Activated B cell treated with CpG ODN at 0.5 μM for 24 hours (primary cell): ENCODE measurements at regions of chr4 and their contacts with region 1.

Region 1: GRCh38 chr4:185304944-185305690 is 90.6 kb downstream of the LRP2BP start:
- DNase-seq: no peak
- ATAC-seq: peak; percentile 86
- H3K4me3 Mint-ChIP-seq: no peak overlapping the region
- H3K27ac Mint-ChIP-seq: peak overlapping the region; percentile 2
- H3K4me1 Mint-ChIP-seq: peaks cover 35% of the 10 kb centered on the region
- H3K27me3 Mint-ChIP-seq: no peaks in the 10 kb centered on the region
- CTCF ChIP-seq: no peak

Region 2: DNA sequence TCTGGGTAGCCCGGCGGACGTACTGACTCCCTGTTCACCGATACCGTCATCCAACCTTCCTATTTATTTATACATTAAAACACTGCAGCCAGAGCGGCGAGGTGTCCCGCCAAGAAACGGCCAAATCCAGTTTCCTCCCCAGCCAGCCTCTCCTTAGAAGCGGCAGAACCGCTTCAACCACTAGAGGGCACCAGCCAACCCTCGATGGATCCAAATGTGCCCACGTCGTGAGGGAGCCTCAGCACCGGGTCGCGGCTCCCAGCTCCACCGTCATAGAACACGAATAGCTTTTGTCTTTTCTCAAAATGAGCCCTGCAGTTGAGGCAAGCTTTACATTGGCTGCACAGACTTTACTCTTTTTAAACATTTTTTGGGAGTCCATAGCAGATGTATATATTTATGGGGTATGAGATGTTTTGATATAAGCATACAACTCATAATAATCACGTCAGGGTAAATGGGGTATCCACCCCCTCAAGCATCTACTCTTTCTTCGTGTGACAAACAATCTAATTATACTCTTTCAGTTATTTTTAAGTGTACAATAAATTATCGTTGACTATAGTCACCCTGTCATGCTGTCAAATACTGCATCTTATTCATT is 299.8 kb before region 1 on chr4:
- CTCF ChIA-PET with region 1: no interaction called
- POLR2A ChIA-PET with region 1: no interaction called
- intact Hi-C with region 1: loop called (anchors 10 kb)
- DNase-seq: peak; percentile 60
- ATAC-seq: peak; percentile 90
- H3K4me3 Mint-ChIP-seq: peak overlapping the region; percentile 48
- H3K27ac Mint-ChIP-seq: no peak overlapping the region
- H3K4me1 Mint-ChIP-seq: peaks cover 9% of the 10 kb centered on the region
- H3K27me3 Mint-ChIP-seq: peaks cover 51% of the 10 kb centered on the region
- CTCF ChIP-seq: peak; percentile 80

Region 3: GRCh38 chr4:185039508-185040273 is 265.4 kb before region 1 on chr4:
- CTCF ChIA-PET with region 1: interaction called, 7 read pairs
- POLR2A ChIA-PET with region 1: no interaction called
- intact Hi-C with region 1: loop called (anchors 1 kb)
- DNase-seq: no peak
- ATAC-seq: peak; percentile 74
- H3K4me3 Mint-ChIP-seq: peak overlapping the region; percentile 24
- H3K27ac Mint-ChIP-seq: no peak overlapping the region
- H3K4me1 Mint-ChIP-seq: peaks cover 5% of the 10 kb centered on the region
- H3K27me3 Mint-ChIP-seq: peaks cover 10% of the 10 kb centered on the region
- CTCF ChIP-seq: no peak

Region 4: GRCh38 chr4:185134307-185134869 is 170.7 kb before region 1 on chr4:
- CTCF ChIA-PET with region 1: interaction called, 4 read pairs
- POLR2A ChIA-PET with region 1: no interaction called
- intact Hi-C with region 1: loop called (anchors 2 kb)
- DNase-seq: no peak
- ATAC-seq: peak; percentile 56
- H3K4me3 Mint-ChIP-seq: no peak overlapping the region
- H3K27ac Mint-ChIP-seq: no peak overlapping the region
- H3K4me1 Mint-ChIP-seq: no peaks in the 10 kb centered on the region
- H3K27me3 Mint-ChIP-seq: peaks cover 9% of the 10 kb centered on the region
- CTCF ChIP-seq: no peak

Region 5: GRCh38 chr4:185171373-185172071 is 133.6 kb before region 1 on chr4:
- CTCF ChIA-PET with region 1: no interaction called
- POLR2A ChIA-PET with region 1: no interaction called
- intact Hi-C with region 1: no loop called
- DNase-seq: no peak
- ATAC-seq: peak; percentile 42
- H3K4me3 Mint-ChIP-seq: peak overlapping the region; percentile 0
- H3K27ac Mint-ChIP-seq: peak overlapping the region; percentile 30
- H3K4me1 Mint-ChIP-seq: peaks cover 16% of the 10 kb centered on the region
- H3K27me3 Mint-ChIP-seq: no peaks in the 10 kb centered on the region
- CTCF ChIP-seq: no peak

Region 6: GRCh38 chr4:185183619-185184281 is 121.4 kb before region 1 on chr4:
- CTCF ChIA-PET with region 1: interaction called, 5 read pairs
- POLR2A ChIA-PET with region 1: no interaction called
- intact Hi-C with region 1: loop called (anchors 1 kb)
- DNase-seq: no peak
- ATAC-seq: peak; percentile 66
- H3K4me3 Mint-ChIP-seq: no peak overlapping the region
- H3K27ac Mint-ChIP-seq: no peak overlapping the region
- H3K4me1 Mint-ChIP-seq: peaks cover 9% of the 10 kb centered on the region
- H3K27me3 Mint-ChIP-seq: no peaks in the 10 kb centered on the region
- CTCF ChIP-seq: peak; percentile 72

Region 7: GRCh38 chr4:185209031-185209851 is 95.9 kb before region 1 on chr4 and contains the start of gene SNX25:
- CTCF ChIA-PET with region 1: interaction called, 4 read pairs
- POLR2A ChIA-PET with region 1: interaction called, 4 read pairs
- intact Hi-C with region 1: loop called (anchors 2 kb)
- DNase-seq: peak; percentile 94
- ATAC-seq: peak; percentile 83
- H3K4me3 Mint-ChIP-seq: peak within 1 kb of the TSS; percentile 95
- H3K27ac Mint-ChIP-seq: peak within 1 kb of the TSS; percentile 94
- H3K4me1 Mint-ChIP-seq: peaks cover 63% of the 10 kb centered on the region
- H3K27me3 Mint-ChIP-seq: no peaks in the 10 kb centered on the region
- CTCF ChIP-seq: no peak
- total RNA-seq, gene SNX25: 53.1 and 53.7 TPM in 2 replicates

Region 8: DNA sequence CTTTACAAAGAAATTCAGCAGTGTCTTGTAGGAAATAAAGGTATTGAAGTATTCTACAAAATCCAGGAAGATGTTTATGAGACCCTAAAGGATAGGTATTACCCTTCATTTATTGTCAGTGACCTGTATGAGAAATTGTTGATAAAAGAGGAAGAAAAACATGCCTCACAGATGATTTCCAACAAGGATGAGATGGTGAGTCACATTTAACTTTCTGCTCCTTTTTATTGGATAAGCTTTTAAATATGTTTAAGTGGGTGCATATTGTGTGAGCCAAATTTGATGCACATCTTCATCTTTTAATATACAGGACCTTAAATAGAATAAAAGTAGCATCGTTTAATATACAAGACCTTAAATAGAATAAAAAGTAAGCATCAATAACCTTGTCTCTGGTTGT is 18.5 kb after region 1 on chr4:
- CTCF ChIA-PET with region 1: no interaction called
- POLR2A ChIA-PET with region 1: no interaction called
- intact Hi-C with region 1: loop called (anchors 2 kb)
- DNase-seq: no peak
- ATAC-seq: no peak
- H3K4me3 Mint-ChIP-seq: no peak overlapping the region
- H3K27ac Mint-ChIP-seq: no peak overlapping the region
- H3K4me1 Mint-ChIP-seq: peaks cover 3% of the 10 kb centered on the region
- H3K27me3 Mint-ChIP-seq: no peaks in the 10 kb centered on the region
- CTCF ChIP-seq: no peak

Region 9: DNA sequence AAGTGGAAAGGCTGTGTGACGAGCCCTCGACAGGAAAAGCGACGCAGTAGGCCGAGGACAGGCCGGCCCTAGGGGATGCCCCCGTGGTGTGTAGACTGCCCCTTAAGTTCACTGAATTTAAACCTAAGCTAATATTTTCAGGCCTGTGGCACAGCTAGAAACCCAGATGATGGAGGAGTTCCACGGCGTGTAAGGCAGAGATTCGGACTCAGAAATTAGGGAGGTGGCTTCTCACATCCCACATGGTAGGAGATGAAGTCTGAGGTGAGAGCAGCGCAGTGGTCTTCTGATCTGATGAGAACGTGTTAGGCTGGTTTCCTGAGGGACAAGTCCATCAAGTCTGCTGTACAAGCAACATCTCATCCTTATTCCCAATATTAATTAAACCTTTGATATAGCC is 82.8 kb after region 1 on chr4:
- CTCF ChIA-PET with region 1: no interaction called
- POLR2A ChIA-PET with region 1: no interaction called
- intact Hi-C with region 1: no loop called
- DNase-seq: no peak
- ATAC-seq: no peak
- H3K4me3 Mint-ChIP-seq: no peak overlapping the region
- H3K27ac Mint-ChIP-seq: no peak overlapping the region
- H3K4me1 Mint-ChIP-seq: peaks cover 18% of the 10 kb centered on the region
- H3K27me3 Mint-ChIP-seq: no peaks in the 10 kb centered on the region
- CTCF ChIP-seq: no peak